Thyroid gland (tissue), 4 donors: ENCODE measurements at regions of chr20 and their contacts with region 1.

Region 1: DNA sequence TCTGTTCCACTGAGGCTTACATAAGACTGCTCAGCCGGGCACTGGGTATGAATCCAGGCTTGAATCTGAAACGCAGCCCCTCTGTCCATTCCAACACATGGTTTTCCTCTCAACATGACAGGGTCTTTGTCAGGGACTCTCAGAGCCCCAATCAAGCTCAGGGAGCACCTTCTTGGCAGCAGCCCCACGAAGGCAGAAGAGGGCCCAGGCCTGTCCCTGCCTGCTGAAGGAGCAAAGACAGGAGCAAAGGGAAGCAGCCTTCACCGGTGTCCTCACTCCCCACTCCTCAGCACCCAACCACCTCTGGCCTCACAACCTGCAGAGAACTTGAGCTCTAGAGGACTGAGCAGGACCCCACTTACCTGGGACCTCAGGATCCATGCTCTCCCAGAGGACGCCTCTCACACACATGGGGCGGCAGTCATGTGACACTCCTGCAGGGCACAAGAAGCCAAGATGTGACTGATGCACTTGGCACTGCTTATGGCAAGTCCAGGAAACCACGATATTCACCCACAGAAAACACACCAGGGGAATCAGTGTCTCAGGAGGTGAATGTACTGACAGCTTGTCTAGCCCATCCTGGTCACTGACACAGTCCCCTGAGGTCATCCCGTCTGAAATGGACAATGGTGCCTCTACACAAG is 4.3 kb downstream of the SNHG17 start:
- DNase-seq: no peak
- H3K4me3 ChIP-seq: no peak overlapping the region
- H3K27ac ChIP-seq: no peak overlapping the region
- H3K4me1 ChIP-seq: peaks cover 0 to 11% of the 10 kb centered on the region in 2 donors
- H3K27me3 ChIP-seq: no peaks in the 10 kb centered on the region
- CTCF ChIP-seq: no peak
- POLR2A ChIP-seq: no peak

Region 2: GRCh38 chr20:38446441-38447209 is 15.8 kb after region 1 on chr20:
- intact Hi-C with region 1: loop called (anchors 2 kb)
- DNase-seq: peak; percentile 90 to 93
- H3K4me3 ChIP-seq: peak overlapping the region; percentile 92 to 100 (median 98)
- H3K27ac ChIP-seq: peak overlapping the region; percentile 74 to 93 (median 93)
- H3K4me1 ChIP-seq: peaks cover 8 to 15% of the 10 kb centered on the region in 2 donors
- H3K27me3 ChIP-seq: no peaks in the 10 kb centered on the region
- CTCF ChIP-seq: peak; percentile 86 to 99 (median 95)
- POLR2A ChIP-seq: peak; percentile 44 to 81

Region 3: DNA sequence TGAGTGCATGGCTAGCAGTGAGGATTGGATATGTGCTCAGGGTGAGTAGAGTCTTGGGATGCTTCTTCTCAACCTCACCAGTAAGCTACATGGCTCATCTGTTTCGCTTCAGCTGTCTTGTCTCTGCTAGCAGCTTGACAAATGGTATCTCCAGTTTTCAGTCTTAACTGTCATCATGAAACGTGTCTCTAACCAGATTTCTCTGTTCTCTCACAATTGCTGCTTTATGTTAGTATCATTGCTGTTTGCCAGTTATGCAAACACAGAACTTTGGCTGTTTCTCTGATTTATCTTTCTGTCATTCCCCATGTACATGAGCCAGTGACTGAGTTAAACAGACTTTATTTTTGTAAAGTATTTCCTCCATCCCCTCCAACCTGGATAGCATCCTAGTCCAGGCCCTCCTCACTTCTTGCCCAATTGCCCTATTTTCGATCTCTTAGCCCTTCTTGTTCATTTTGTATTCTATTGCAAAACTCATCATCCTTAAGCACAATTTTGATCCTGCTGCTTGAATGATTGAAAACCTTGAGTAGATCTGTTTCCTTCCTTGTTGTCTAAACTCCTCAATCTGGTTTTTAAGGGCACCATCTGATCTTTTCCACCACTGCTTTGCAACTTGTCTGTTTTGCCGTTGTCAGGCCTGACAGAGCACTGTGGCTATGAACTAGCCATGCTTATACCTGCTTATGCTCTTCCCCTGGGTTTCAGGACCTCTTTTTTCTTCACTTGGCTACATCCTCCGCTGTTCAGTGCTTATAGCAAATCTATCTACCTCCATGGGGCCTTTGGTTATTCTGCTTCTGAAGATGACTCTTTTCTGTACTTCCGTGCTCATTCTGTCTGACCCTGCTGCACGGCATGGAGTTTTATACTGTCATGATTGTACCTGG is 112.5 kb after region 1 on chr20:
- intact Hi-C with region 1: no loop called
- DNase-seq: no peak
- H3K4me3 ChIP-seq: no peak overlapping the region
- H3K27ac ChIP-seq: no peak overlapping the region
- H3K4me1 ChIP-seq: no peaks in the 10 kb centered on the region
- H3K27me3 ChIP-seq: no peaks in the 10 kb centered on the region
- CTCF ChIP-seq: no peak
- POLR2A ChIP-seq: no peak

Region 4: GRCh38 chr20:38730989-38731737 is 300.4 kb after region 1 on chr20:
- intact Hi-C with region 1: no loop called
- DNase-seq: peak; percentile 56 to 58
- H3K4me3 ChIP-seq: peak overlapping the region in 1 of 3 donors; percentile 21
- H3K27ac ChIP-seq: no peak overlapping the region
- H3K4me1 ChIP-seq: peaks cover 8 to 39% of the 10 kb centered on the region in 2 donors
- H3K27me3 ChIP-seq: peaks cover 56% of the 10 kb centered on the region
- CTCF ChIP-seq: peak; percentile 69 to 99 (median 84)
- POLR2A ChIP-seq: no peak